ENCODE measurements at regions of chr15 and their contacts with region 1.

Region 1: GRCh38 chr15:69225355-69226025 is 65.1 kb downstream of the GLCE start:
- DNase-seq: no peak
- H3K4me3 ChIP-seq: no peak overlapping the region
- H3K27ac ChIP-seq: no peak overlapping the region
- H3K4me1 ChIP-seq: peaks cover 0 to 8% (median 3%) of the 10 kb centered on the region in 4 experiments; a peak in 4 of 7 replicates
- H3K27me3 ChIP-seq: peaks cover 0 to 1% (median 0%) of the 10 kb centered on the region in 4 experiments; a peak in 1 of 7 replicates
- CTCF ChIP-seq: peak in 2 of 3 experiments; percentile 24 to 38; a peak in 2 of 4 replicates
- EP300 ChIP-seq: no peak
- POLR2A ChIP-seq: no peak
- RAD21 ChIP-seq: peak; percentile 67 to 68

Region 2: DNA sequence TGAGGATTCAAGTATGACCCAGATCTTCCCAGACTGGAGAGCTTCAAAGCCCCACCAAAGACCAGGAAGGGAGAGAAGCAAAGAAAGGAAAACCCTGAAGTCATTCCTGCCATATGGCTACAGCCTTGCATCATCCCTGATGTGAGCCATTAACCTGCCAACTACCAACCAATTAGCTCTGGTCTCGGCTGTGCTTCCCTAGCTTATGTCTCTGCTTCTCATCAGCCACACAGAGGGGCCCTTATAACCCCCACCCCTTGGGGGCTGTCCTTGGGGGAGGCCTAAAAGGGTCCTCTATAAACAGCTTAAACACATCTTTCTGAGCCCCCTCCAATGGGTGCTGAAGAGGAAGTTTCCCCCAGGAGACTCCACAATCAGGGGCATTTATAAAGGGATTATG is 158.2 kb before region 1 on chr15:
- CTCF ChIA-PET with region 1: interaction called, 18 read pairs
- POLR2A ChIA-PET with region 1: no interaction called
- DNase-seq: no peak
- H3K4me3 ChIP-seq: no peak overlapping the region
- H3K27ac ChIP-seq: no peak overlapping the region
- H3K4me1 ChIP-seq: no peaks in the 10 kb centered on the region
- H3K27me3 ChIP-seq: peaks cover 0 to 3% (median 0%) of the 10 kb centered on the region in 4 experiments; a peak in 2 of 7 replicates
- CTCF ChIP-seq: no peak
- EP300 ChIP-seq: no peak
- POLR2A ChIP-seq: no peak
- RAD21 ChIP-seq: no peak

Region 3: DNA sequence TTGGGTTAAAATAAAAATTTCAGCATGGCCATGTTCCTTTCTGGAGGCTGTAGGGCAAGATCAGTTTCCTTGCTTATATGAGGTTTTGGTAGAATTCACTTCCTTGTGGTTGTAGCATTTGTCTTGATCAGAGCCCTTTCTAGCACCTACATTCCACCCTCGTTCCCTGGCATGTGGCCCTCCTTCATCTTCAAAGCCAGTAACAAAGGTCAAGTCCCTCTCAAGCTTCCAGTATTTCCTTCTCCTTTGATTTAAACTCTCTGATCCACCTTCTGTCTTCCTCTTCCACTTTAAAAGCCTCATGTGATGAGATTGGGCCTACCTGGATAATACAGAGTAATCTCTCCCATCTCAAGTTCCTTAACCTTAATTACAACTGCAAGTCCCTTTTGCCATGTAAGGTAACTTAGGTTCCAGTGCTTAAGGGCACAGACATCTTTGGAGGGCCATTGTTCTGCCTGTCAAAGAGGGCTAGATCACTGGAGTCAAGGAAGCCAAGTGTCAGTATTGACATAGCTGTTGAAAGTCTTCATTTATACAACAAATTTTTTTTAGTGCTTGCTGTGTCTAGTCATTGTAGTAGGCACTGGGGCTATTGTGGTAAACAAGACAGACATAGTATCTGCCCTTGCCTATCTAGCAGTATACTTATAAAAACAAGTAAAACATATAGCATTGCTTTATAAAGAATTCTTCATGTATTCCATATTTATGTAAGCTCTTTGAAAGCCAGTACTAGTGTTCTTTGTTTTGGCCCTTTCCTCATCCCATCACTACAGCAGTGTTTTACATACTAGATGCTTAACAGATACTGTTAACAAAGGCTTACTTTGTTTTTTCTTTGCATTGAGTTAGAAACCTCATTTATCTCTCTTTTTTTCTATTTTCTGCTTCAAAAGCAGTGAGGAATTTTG is 24.4 kb before region 1 on chr15:
- CTCF ChIA-PET with region 1: no interaction called
- POLR2A ChIA-PET with region 1: no interaction called
- DNase-seq: no peak
- H3K4me3 ChIP-seq: no peak overlapping the region
- H3K27ac ChIP-seq: no peak overlapping the region
- H3K4me1 ChIP-seq: peaks cover 0 to 5% (median 1%) of the 10 kb centered on the region in 4 experiments; a peak in 3 of 7 replicates
- H3K27me3 ChIP-seq: no peaks in the 10 kb centered on the region
- CTCF ChIP-seq: no peak
- EP300 ChIP-seq: no peak
- POLR2A ChIP-seq: no peak
- RAD21 ChIP-seq: no peak

Region 4: GRCh38 chr15:69272139-69272538 is 46.6 kb after region 1 on chr15:
- CTCF ChIA-PET with region 1: no interaction called
- POLR2A ChIA-PET with region 1: no interaction called
- DNase-seq: no peak
- H3K4me3 ChIP-seq: no peak overlapping the region
- H3K27ac ChIP-seq: no peak overlapping the region
- H3K4me1 ChIP-seq: peaks cover 2 to 13% (median 6%) of the 10 kb centered on the region in 4 experiments; a peak in 5 of 7 replicates
- H3K27me3 ChIP-seq: no peaks in the 10 kb centered on the region
- CTCF ChIP-seq: no peak
- EP300 ChIP-seq: no peak
- POLR2A ChIP-seq: no peak
- RAD21 ChIP-seq: no peak